Upper lobe of right lung (tissue), 1 donor: ENCODE measurements at regions of chr3 and their contacts with region 1.

Region 1: GRCh38 chr3:48548729-48549705 is 7.6 kb downstream of the PFKFB4 start:
- DNase-seq: peak; percentile 90
- ATAC-seq: peak; percentile 96
- H3K4me3 ChIP-seq: no peak overlapping the region
- H3K27ac ChIP-seq: no peak overlapping the region
- H3K4me1 ChIP-seq: no peaks in the 10 kb centered on the region
- H3K27me3 ChIP-seq: no peaks in the 10 kb centered on the region
- CTCF ChIP-seq: peak; percentile 96

Region 2: DNA sequence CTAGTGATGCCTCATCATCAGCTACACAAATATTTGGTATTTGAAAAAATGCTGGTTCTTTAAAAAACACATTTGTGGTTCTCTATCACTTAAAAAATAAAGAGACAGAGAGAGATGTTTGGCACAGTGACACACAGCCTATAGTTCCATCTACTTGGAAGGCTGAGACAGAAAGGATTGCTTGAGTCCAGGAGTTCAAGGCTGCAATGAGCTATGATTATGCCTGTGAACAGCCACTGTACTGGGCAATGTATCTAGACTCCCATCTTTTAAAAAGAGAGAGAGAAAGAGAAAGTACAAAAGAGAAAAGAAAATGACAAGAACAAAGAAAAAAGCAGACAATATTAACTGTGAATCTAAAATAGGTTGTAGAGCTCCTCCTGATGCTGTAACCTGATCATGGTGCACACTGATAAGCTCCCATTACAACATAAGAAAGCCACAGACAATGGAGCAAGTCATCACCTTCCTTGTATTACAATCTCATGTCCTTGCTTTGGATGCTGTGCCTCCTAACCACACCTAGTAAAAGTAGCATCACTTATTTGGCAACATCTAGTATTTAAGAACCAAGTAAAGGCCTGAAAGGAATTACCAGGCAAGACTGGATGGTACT is 501.1 kb before region 1 on chr3:
- intact Hi-C with region 1: no loop called
- DNase-seq: no peak
- ATAC-seq: no peak
- H3K4me3 ChIP-seq: no peak overlapping the region
- H3K27ac ChIP-seq: no peak overlapping the region
- H3K4me1 ChIP-seq: no peaks in the 10 kb centered on the region
- H3K27me3 ChIP-seq: no peaks in the 10 kb centered on the region
- CTCF ChIP-seq: no peak

Region 3: GRCh38 chr3:48273594-48274211 is 275.3 kb before region 1 on chr3:
- intact Hi-C with region 1: loop called (anchors 10 kb)
- DNase-seq: no peak
- ATAC-seq: peak; percentile 85
- H3K4me3 ChIP-seq: no peak overlapping the region
- H3K27ac ChIP-seq: no peak overlapping the region
- H3K4me1 ChIP-seq: no peaks in the 10 kb centered on the region
- H3K27me3 ChIP-seq: no peaks in the 10 kb centered on the region
- CTCF ChIP-seq: peak; percentile 80

Region 4: GRCh38 chr3:48439820-48440589 is 109.0 kb before region 1 on chr3 and contains the starts of genes CCDC51 and TMA7:
- intact Hi-C with region 1: no loop called
- DNase-seq: peak; percentile 99
- ATAC-seq: peak; percentile 97
- H3K4me3 ChIP-seq: peak within 1 kb of the TSS; percentile 74
- H3K27ac ChIP-seq: peak within 1 kb of the TSS; percentile 94
- H3K4me1 ChIP-seq: peaks cover 18% of the 10 kb centered on the region
- H3K27me3 ChIP-seq: no peaks in the 10 kb centered on the region
- CTCF ChIP-seq: no peak
- total RNA-seq, gene CCDC51: 11.4 TPM
- total RNA-seq, gene TMA7: 169 TPM

Region 5: GRCh38 chr3:48465531-48466378 is 83.3 kb before region 1 on chr3:
- intact Hi-C with region 1: loop called (anchors 2 kb)
- DNase-seq: peak; percentile 95
- ATAC-seq: peak; percentile 94
- H3K4me3 ChIP-seq: peak overlapping the region; percentile 66
- H3K27ac ChIP-seq: peak overlapping the region; percentile 100
- H3K4me1 ChIP-seq: peaks cover 49% of the 10 kb centered on the region
- H3K27me3 ChIP-seq: no peaks in the 10 kb centered on the region
- CTCF ChIP-seq: peak; percentile 70

Region 6: GRCh38 chr3:48492543-48493501 is 56.2 kb before region 1 on chr3:
- intact Hi-C with region 1: no loop called
- DNase-seq: no peak
- ATAC-seq: no peak
- H3K4me3 ChIP-seq: no peak overlapping the region
- H3K27ac ChIP-seq: no peak overlapping the region
- H3K4me1 ChIP-seq: no peaks in the 10 kb centered on the region
- H3K27me3 ChIP-seq: no peaks in the 10 kb centered on the region
- CTCF ChIP-seq: no peak